ACHN (cell line): ENCODE measurements at regions of chr2 and their contacts with region 1.

Region 1: DNA sequence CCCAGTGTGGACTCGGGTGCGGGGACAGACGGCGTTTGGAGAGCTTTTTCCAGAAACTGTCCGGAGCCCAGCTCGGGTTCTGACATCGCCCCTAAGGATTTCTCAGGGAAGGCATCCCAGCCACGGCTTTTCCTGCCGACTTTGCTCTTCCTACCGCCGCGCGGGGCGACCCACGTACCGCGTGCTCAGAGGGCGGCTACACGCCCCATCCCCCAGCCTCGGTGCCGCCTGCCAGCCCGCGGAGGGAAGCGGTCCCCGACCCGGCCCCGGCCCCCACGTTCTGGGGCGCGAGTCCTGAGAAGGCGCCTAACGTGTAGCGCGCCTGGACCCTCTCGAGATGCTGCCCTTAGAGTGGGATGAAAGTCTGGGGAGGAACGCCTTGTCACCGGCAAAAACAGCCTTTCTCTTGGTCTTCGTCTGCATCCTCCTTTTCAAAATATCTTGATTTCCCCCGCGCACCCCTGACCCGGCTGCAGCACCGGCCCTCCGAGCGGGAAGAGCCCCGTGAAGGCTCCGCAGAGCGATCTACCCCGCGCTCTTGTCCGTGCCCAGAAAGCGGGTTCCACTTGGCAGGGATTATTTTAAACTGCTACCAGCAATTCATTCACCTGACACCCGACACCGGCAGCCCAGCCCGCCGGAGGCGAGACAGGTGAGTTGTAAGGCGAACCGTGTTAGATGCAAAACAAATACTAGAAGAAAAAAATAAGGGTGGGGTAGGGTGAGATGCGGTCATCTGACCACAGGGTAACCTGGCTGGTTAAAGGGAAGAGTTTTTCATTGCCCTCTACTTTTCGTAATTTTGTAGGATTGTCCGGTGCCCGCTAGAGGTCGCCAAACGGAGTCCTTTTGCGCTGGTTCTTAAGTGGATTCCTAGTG is 812 bp upstream of the KCNG3 start:
- DNase-seq: peak; percentile 86

Region 2: GRCh38 chr2:41932241-41933030 is 562.2 kb before region 1 on chr2:
- in situ Hi-C with region 1: no loop called
- DNase-seq: no peak

Region 3: GRCh38 chr2:42342061-42342794 is 152.4 kb before region 1 on chr2:
- in situ Hi-C with region 1: no loop called
- DNase-seq: peak; percentile 57

Region 4: DNA sequence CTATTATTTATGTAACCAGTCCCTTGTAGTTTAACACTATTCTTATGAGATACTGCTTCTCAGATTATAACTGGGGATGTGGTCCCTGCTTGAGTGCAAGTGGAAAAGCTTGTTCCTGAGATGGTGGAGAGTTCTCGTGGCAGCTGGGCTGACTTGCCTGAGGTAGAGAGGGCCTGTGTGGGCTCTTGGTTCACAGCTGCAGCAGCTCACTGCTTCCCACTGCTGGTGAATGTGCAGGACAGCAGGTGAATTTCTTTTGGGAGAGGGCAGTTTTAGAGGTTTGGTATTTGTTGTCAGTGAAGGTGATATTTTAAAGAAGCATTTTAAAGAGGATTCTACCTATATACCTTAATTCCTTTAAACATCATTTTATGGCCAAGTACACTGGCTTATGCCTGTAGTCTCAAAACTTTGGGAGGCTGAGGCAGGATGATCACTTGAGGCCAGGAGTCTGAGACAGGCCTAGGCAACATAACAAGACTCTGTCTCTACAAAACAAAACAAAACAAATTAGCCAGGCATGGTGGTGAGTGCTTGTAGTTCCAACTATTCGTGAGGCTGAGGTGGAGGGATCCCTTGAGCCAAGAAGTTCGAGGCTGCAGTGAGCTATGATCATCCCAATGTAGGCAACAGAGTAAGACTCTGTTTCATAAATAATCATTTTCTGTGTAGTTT is 168.6 kb after region 1 on chr2:
- in situ Hi-C with region 1: loop called (anchors 10 kb)
- DNase-seq: peak; percentile 74